Naive thymus-derived CD8-positive, alpha-beta T cell (primary cell): ENCODE measurements at regions of chr6 and their contacts with region 1.

Region 1: DNA sequence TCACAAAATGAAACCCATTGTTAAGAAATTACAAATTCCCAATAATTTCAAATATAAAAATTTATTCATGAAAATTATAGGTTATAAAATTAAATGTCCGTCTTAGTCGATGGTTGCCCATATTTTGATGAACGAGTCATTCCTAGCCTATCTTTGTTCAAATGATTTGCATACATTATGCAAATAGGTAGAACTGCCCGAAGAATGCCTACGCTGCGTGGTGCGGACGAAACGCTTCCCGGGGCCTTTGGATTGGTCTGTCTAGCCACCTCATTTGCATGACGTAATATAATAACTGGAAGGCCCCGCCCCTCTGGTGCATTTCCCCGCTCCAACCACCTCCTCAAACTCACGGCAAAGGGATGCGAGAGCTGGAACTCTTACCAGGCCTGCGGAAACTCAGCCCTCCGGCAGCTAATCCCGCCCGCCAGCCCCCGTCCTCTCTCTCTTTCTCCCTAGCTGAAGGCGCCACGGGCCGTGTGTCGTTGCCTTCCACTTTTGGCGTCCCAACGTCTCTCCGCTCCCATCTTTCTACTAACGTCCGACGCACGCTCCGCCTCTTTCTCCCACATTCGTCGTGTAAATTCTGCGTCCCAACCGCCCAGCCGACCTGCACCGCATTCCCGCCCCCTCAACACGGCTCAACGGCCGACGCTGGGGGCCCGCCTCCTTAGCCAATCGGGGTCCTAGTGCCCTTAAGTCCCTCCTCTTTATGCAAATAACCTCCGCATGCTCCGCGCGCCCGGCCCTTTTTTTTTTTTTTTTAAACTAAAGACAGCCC is 520 bp upstream of the PRRC2A start:
- DNase-seq: peak; percentile 88 to 97 (median 96)
- ATAC-seq: peak; percentile 83
- H3K4me3 Mint-ChIP-seq: peak overlapping the region; percentile 77 to 99 (median 94)
- H3K27ac Mint-ChIP-seq: peak overlapping the region; percentile 95 to 100 (median 98)
- H3K4me1 Mint-ChIP-seq: peaks cover 31 to 60% (median 46%) of the 10 kb centered on the region in 4 donors
- H3K27me3 Mint-ChIP-seq: no peaks in the 10 kb centered on the region

Region 2: GRCh38 chr6:31580807-31581433 is 39.1 kb before region 1 on chr6:
- POLR2A ChIA-PET with region 1: interaction called, 34 read pairs
- DNase-seq: peak; percentile 77 to 95 (median 90)
- ATAC-seq: peak; percentile 79
- H3K4me3 Mint-ChIP-seq: peak overlapping the region; percentile 97 to 100 (median 99)
- H3K27ac Mint-ChIP-seq: peak overlapping the region; percentile 92 to 100 (median 98)
- H3K4me1 Mint-ChIP-seq: peaks cover 32 to 87% (median 73%) of the 10 kb centered on the region in 4 donors
- H3K27me3 Mint-ChIP-seq: no peaks in the 10 kb centered on the region

Region 3: DNA sequence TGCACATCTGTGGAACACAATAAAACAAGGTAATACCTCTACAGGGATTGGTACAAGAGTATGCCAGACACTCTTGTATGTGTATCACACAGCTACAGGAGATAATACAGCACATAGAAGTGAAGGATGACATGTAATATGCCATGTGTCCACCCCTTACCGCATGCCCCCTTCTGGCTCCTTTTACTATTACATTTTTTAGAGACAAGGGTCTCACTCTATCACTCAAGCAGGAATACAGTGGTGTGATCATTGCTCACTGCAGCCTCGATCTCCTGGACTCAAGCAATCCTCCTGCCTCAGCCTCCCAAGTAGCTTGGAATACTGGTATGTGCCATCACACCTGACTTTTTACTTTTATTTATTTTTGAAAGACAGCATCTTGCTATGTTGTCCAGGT is 23.0 kb before region 1 on chr6:
- POLR2A ChIA-PET with region 1: interaction called, 16 read pairs
- DNase-seq: peak in 7 of 10 donors; percentile 42 to 82 (median 79)
- ATAC-seq: peak; percentile 78 to 80
- H3K4me3 Mint-ChIP-seq: peak overlapping the region in 9 of 10 donors; percentile 30 to 74 (median 62)
- H3K27ac Mint-ChIP-seq: peak overlapping the region; percentile 46 to 90 (median 84)
- H3K4me1 Mint-ChIP-seq: peaks cover 19 to 57% (median 54%) of the 10 kb centered on the region in 4 donors
- H3K27me3 Mint-ChIP-seq: no peaks in the 10 kb centered on the region

Region 4: GRCh38 chr6:31660381-31661261 is 40.6 kb after region 1 on chr6 and contains the start of gene C6orf47:
- POLR2A ChIA-PET with region 1: interaction called, 18 read pairs
- DNase-seq: peak; percentile 59 to 81 (median 69)
- ATAC-seq: peak; percentile 57 to 74
- H3K4me3 Mint-ChIP-seq: peak within 1 kb of the TSS; percentile 85 to 95 (median 93)
- H3K27ac Mint-ChIP-seq: peak within 1 kb of the TSS; percentile 84 to 93 (median 90)
- H3K4me1 Mint-ChIP-seq: peaks cover 39 to 89% (median 83%) of the 10 kb centered on the region in 4 donors
- H3K27me3 Mint-ChIP-seq: no peaks in the 10 kb centered on the region
- polyA plus RNA-seq, gene C6orf47: 17.0 to 36.7 (median 21.3) TPM

Region 5: DNA sequence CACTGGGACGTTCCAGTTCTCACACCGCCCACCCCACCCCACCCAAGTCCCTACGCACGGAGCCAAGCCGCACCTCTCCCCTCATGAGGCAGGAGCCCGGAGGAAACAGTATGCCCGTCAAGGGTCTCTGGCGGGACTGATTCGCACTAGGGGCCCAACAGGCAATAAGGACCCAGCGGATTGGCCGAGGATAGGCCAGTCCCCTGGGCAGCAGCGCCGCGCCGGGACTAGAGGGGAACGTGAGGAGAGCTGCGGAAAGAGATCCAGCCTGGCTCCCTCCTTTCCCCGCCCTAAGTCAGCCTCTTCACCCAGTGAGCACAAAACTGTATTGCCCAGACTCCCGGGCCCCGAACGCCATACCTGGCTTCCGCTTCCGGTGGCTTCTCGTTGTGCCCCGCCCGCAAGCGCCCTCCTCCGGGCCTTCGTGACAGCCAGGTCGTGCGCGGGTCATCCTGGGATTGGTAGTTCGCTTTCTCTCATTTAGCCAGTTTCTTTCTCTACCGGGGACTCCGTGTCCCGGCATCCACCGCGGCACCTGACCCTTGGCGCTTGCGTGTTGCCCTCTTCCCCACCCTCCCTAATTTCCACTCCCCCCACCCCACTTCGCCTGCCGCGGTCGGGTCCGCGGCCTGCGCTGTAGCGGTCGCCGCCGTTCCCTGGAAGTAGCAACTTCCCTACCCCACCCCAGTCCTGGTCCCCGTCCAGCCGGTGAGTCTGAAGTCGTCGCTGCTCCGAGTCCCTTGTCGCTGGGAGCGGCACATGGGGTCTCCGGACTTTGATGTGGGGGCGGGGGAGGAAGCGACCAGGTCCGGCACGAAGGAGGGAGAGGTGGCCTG is 45.7 kb after region 1 on chr6 and contains the start of gene CSNK2B:
- POLR2A ChIA-PET with region 1: interaction called, 18 read pairs
- DNase-seq: peak; percentile 94 to 98 (median 98)
- ATAC-seq: peak; percentile 85 to 86
- H3K4me3 Mint-ChIP-seq: peak within 1 kb of the TSS; percentile 93 to 100 (median 97)
- H3K27ac Mint-ChIP-seq: peak within 1 kb of the TSS; percentile 96 to 99 (median 98)
- H3K4me1 Mint-ChIP-seq: peaks cover 21 to 73% (median 67%) of the 10 kb centered on the region in 4 donors
- H3K27me3 Mint-ChIP-seq: no peaks in the 10 kb centered on the region
- polyA plus RNA-seq, gene CSNK2B: 214 to 230 (median 217) TPM